Right ventricle myocardium inferior (tissue), 1 donor: ENCODE measurements at regions of chr15 and their contacts with region 1.

Region 1: GRCh38 chr15:97386940-97387339 is 573.6 kb upstream of the ARRDC4 start:
- DNase-seq: no peak
- ATAC-seq: no peak

Region 2: DNA sequence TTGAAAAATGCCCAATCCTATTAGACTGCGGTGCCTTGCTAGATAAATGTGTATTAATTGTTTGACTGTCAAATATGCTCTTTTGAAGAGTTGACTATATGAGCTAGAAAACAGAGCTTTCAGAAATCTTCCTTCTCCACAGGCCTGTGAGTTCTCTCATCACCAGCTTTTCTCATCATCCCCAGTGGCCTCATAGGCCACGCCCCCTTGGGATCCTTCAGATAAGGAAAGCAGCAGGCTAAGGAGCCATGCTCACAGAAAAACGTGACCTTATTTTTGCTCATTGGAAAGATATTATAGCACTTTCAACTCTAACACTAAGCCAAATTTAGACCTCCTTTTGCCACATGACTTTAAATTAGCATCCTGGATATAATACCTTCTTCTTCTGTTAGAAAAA is 59.2 kb after region 1 on chr15:
- intact Hi-C with region 1: loop called (anchors 10 kb)
- DNase-seq: no peak
- ATAC-seq: no peak